PC-9 (cell line): ENCODE measurements at regions of chr6 and their contacts with region 1.

Region 1: DNA sequence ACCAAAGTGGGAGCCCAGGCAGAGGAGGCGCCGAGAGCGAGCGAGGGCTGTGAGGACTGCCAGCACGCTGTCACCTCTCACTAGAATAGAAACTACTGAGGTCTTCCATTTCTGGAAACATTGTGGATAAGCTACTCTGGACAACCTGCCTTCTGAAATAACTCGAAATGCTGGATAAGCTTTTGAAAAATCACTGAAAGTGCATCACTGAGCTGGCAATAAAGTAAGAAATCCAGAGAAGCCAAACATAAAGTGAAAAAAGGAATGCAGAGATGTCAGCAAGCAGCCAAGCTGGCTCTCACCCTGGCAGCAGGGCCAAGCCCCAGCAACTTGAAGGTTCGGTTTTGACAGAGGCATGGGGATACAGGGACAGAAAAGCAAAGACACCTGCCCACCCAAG is 59.2 kb upstream of the MYLIP start:
- DNase-seq: no peak
- H3K4me3 ChIP-seq: no peak overlapping the region
- H3K27ac ChIP-seq: no peak overlapping the region
- H3K4me1 ChIP-seq: no peaks in the 10 kb centered on the region
- H3K27me3 ChIP-seq: peaks cover 68% of the 10 kb centered on the region
- CTCF ChIP-seq: no peak

Region 2: GRCh38 chr6:16183187-16183664 is 113.6 kb after region 1 on chr6:
- CTCF ChIA-PET with region 1: no interaction called
- POLR2A ChIA-PET with region 1: no interaction called
- intact Hi-C with region 1: loop called (anchors 5 kb)
- DNase-seq: no peak
- H3K4me3 ChIP-seq: no peak overlapping the region
- H3K27ac ChIP-seq: no peak overlapping the region
- H3K4me1 ChIP-seq: no peaks in the 10 kb centered on the region
- H3K27me3 ChIP-seq: peaks cover 53% of the 10 kb centered on the region
- CTCF ChIP-seq: peak; percentile 70